ENCODE measurements at regions of chr20 and their contacts with region 1.

Region 1: DNA sequence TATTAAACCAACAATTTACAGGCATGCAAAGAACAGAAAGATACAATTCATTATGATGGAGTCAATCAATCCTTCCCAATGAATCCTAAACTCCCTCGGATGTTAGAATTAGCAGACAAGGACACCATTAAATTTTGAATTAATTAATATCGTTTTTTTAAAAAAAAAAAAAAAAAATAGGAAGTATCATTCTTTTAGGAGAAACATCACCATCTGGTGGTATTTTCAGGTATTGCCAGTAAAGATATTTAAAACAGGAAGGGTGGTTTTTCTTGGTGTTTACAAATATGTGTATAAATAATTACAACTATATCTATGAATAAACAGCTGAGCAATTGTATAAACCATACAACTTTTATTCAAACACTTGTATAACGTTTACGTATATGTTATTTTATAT is 564.4 kb downstream of the HAO1 start:
- DNase-seq: peak; percentile 73
- ATAC-seq: no peak
- H3K4me3 ChIP-seq: no peak overlapping the region
- H3K27ac ChIP-seq: no peak overlapping the region
- H3K4me1 ChIP-seq: peaks cover 11% of the 10 kb centered on the region; the same call in 1 of the 2 replicates
- H3K27me3 ChIP-seq: no peaks in the 10 kb centered on the region
- CTCF ChIP-seq: peak; percentile 51

Region 2: GRCh38 chr20:6142348-6142993 is 1233.4 kb before region 1 on chr20:
- CTCF ChIA-PET with region 1: no interaction called
- POLR2A ChIA-PET with region 1: no interaction called
- intact Hi-C with region 1: loop called (anchors 5 kb)
- DNase-seq: peak; percentile 89
- ATAC-seq: peak; percentile 91
- H3K4me3 ChIP-seq: peak overlapping the region; percentile 15; the same call in 1 of the 2 replicates
- H3K27ac ChIP-seq: no peak overlapping the region
- H3K4me1 ChIP-seq: no peaks in the 10 kb centered on the region
- H3K27me3 ChIP-seq: peaks cover 31% of the 10 kb centered on the region; the same call in 1 of the 2 replicates
- CTCF ChIP-seq: peak; percentile 93

Region 3: GRCh38 chr20:6178537-6178936 is 1197.4 kb before region 1 on chr20:
- CTCF ChIA-PET with region 1: interaction called, 3 read pairs
- POLR2A ChIA-PET with region 1: no interaction called
- intact Hi-C with region 1: loop called (anchors 10 kb)
- DNase-seq: peak; percentile 72
- ATAC-seq: peak; percentile 69
- H3K4me3 ChIP-seq: no peak overlapping the region
- H3K27ac ChIP-seq: no peak overlapping the region
- H3K4me1 ChIP-seq: no peaks in the 10 kb centered on the region
- H3K27me3 ChIP-seq: peaks cover 67% of the 10 kb centered on the region
- CTCF ChIP-seq: peak; percentile 87

Region 4: GRCh38 chr20:6828794-6829423 is 547.0 kb before region 1 on chr20:
- CTCF ChIA-PET with region 1: no interaction called
- POLR2A ChIA-PET with region 1: no interaction called
- intact Hi-C with region 1: loop called (anchors 2 kb)
- DNase-seq: peak; percentile 85
- ATAC-seq: peak; percentile 89
- H3K4me3 ChIP-seq: no peak overlapping the region
- H3K27ac ChIP-seq: no peak overlapping the region
- H3K4me1 ChIP-seq: peaks cover 5% of the 10 kb centered on the region; the same call in 1 of the 2 replicates
- H3K27me3 ChIP-seq: peaks cover 25% of the 10 kb centered on the region
- CTCF ChIP-seq: peak; percentile 83

Region 5: DNA sequence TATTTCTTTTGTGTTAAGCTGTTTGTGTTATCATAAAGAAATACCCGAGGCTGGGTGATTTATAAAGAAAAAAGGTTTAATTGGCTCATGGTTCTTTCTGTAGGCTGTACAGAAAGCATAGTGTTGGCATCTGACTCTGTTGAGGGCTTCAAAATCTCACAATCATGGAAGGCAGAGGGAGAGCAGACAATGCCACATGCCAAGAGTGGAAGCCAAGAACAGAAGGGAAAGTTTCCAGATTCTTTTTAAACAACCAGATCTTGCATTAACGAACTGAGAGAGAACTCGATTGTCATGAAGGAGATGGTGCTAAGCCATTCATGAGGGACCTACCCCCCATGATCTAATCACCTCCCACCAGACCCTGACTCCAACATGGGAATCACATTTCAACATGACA is 318.3 kb before region 1 on chr20:
- CTCF ChIA-PET with region 1: no interaction called
- POLR2A ChIA-PET with region 1: no interaction called
- intact Hi-C with region 1: no loop called
- DNase-seq: no peak
- ATAC-seq: no peak
- H3K4me3 ChIP-seq: no peak overlapping the region
- H3K27ac ChIP-seq: no peak overlapping the region
- H3K4me1 ChIP-seq: no peaks in the 10 kb centered on the region
- H3K27me3 ChIP-seq: peaks cover 69% of the 10 kb centered on the region
- CTCF ChIP-seq: no peak

Region 6: DNA sequence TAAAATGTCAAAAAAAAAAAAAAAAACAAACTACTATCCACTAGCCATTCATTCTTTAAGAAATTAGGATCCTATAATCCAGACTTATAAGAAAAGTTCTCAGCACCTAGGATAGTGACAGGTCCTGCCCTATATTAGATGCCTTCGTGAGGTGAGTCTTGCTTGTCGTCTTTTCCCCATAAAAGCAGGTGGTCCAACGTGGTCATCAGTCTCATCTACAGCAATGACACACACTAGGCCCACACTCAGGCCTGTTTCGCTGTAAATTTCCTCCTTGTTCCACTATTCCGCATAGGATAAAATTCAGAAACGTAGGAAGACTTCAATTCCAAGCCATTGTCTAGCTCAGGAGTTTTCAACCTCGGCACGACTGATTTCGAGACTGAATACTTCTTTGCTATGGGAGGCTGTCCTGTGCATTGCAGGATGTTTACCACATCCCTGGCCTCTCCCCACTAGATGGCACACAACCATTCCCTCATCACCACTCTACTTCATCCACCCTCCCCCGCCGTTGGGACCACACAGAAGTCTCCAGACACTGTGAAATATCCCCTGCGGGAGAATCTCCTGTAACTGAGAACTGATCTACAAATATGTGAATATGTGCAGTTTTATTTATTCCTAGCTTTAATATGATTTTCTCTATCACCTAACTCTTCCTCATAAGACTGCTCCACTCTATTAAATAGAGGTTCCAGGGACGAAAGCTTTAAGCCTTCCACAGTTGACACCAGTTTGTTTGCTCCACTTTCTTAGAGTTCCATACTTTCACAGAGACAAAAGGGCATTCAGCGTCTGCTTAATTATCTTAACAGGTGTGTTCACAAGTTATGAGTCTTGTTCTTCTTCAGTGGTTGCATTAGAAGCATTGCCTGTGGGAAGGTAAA is 262.1 kb before region 1 on chr20:
- CTCF ChIA-PET with region 1: no interaction called
- POLR2A ChIA-PET with region 1: no interaction called
- intact Hi-C with region 1: loop called (anchors 5 kb)
- DNase-seq: peak; percentile 59
- ATAC-seq: peak; percentile 85
- H3K4me3 ChIP-seq: no peak overlapping the region
- H3K27ac ChIP-seq: no peak overlapping the region
- H3K4me1 ChIP-seq: no peaks in the 10 kb centered on the region
- H3K27me3 ChIP-seq: peaks cover 40% of the 10 kb centered on the region
- CTCF ChIP-seq: peak; percentile 85

Region 7: DNA sequence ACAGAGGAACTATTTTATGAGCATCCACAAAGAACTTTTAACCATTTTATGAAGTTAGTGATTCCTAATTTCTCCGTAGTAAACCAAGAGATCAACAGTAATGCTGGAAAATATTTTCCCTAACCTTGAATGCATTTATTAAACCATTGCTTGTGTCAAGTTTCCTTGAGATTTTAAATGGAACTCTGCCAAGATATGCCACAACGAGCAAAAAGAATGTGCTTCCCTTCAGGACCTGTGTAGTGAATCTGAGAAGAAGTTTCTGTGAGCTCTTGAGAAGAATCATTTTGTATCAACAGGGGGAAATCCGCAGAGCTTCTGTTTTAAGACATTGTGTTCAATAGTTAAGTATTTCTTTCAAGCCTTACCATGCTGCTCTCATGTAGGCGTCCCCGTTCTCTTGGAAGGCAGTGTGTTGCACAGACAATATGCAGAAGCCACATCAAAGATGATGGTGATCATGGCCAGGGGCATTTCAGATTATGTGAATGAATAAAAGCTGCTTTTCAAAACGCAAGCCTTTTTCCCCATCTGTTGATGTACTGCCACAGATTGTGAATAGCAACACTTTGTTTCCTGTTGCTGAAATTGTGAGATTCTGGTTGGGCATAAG is 168.6 kb before region 1 on chr20:
- CTCF ChIA-PET with region 1: no interaction called
- POLR2A ChIA-PET with region 1: no interaction called
- intact Hi-C with region 1: no loop called
- DNase-seq: peak; percentile 18
- ATAC-seq: no peak
- H3K4me3 ChIP-seq: no peak overlapping the region
- H3K27ac ChIP-seq: no peak overlapping the region
- H3K4me1 ChIP-seq: no peaks in the 10 kb centered on the region
- H3K27me3 ChIP-seq: peaks cover 26% of the 10 kb centered on the region
- CTCF ChIP-seq: no peak

Region 8: DNA sequence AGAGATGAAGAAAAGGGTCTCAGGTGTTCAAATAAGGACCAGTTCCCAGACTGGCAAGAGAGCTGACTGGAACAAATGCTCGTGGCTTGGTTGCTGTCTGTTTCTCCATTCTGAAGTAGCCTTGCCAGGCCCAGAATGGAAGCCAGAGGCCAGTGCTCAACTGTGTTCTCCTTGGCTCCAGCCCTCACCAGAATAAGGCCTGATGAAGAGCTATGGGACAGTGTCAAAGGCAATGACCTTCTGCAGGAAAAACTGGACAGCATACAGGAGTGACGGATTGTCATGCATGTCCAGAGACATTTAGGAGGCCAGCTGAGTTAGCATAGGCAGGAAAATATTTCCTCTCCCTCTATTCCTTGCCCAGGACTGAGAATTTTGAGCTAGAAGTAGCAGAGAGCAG is 492.2 kb after region 1 on chr20:
- CTCF ChIA-PET with region 1: no interaction called
- POLR2A ChIA-PET with region 1: no interaction called
- intact Hi-C with region 1: loop called (anchors 2 kb)
- DNase-seq: no peak
- ATAC-seq: no peak
- H3K4me3 ChIP-seq: no peak overlapping the region
- H3K27ac ChIP-seq: no peak overlapping the region
- H3K4me1 ChIP-seq: no peaks in the 10 kb centered on the region
- H3K27me3 ChIP-seq: no peaks in the 10 kb centered on the region
- CTCF ChIP-seq: no peak